ENCODE measurements at regions of chr3 and their contacts with region 1.

Region 1: GRCh38 chr3:58532794-58533220 is 4.2 kb downstream of the ACOX2 start:
- H3K4me3 Mint-ChIP-seq: no peak overlapping the region
- H3K27ac Mint-ChIP-seq: peak overlapping the region; percentile 26
- H3K4me1 Mint-ChIP-seq: peaks cover 39% of the 10 kb centered on the region
- H3K27me3 Mint-ChIP-seq: no peaks in the 10 kb centered on the region

Region 2: GRCh38 chr3:58305882-58306711 is 226.7 kb before region 1 on chr3 and contains the starts of genes HTD2 and RPP14:
- intact Hi-C with region 1: loop called (anchors 2 kb)
- H3K4me3 Mint-ChIP-seq: peak within 1 kb of the TSS; percentile 86
- H3K27ac Mint-ChIP-seq: peak within 1 kb of the TSS; percentile 99
- H3K4me1 Mint-ChIP-seq: peaks cover 25% of the 10 kb centered on the region
- H3K27me3 Mint-ChIP-seq: peaks cover 9% of the 10 kb centered on the region

Region 3: GRCh38 chr3:58324391-58325390 is 208.1 kb before region 1 on chr3:
- intact Hi-C with region 1: loop called (anchors 5 kb)
- H3K4me3 Mint-ChIP-seq: no peak overlapping the region
- H3K27ac Mint-ChIP-seq: no peak overlapping the region
- H3K4me1 Mint-ChIP-seq: peaks cover 12% of the 10 kb centered on the region
- H3K27me3 Mint-ChIP-seq: no peaks in the 10 kb centered on the region

Region 4: DNA sequence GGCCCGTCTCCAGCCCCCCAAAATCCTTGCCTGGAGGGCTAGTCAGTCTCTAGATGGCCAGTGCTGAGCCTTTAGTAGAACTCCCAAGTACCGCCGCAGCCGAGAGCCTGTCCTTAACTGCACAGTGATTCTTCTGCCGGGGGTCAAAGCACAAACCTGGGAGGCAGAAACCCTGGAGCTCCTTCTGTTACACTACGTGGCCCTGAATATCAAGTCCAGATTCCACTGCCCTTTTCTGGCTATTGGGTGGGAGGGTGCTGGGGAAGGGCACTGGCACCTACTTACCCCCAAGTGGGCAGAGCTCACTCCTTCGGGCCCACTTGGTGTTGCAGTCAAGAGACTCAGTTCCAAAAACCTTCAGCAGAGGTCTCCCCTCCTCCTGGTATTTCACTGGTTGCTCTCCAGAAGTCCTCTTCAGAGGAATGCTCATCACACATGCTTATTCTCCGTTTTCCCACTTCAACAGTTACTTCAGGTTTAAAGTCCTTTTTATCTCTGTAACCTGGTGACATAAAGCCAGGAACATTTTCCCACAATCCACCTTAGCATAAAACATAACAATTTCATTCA is 110.0 kb before region 1 on chr3:
- intact Hi-C with region 1: no loop called
- H3K4me3 Mint-ChIP-seq: no peak overlapping the region
- H3K27ac Mint-ChIP-seq: peak overlapping the region; percentile 24
- H3K4me1 Mint-ChIP-seq: peaks cover 29% of the 10 kb centered on the region
- H3K27me3 Mint-ChIP-seq: no peaks in the 10 kb centered on the region

Region 5: GRCh38 chr3:58433400-58434169 is 99.2 kb before region 1 on chr3 and contains the start of gene PDHB:
- intact Hi-C with region 1: loop called (anchors 1 kb)
- H3K4me3 Mint-ChIP-seq: peak within 1 kb of the TSS; percentile 83
- H3K27ac Mint-ChIP-seq: peak within 1 kb of the TSS; percentile 95
- H3K4me1 Mint-ChIP-seq: peaks cover 35% of the 10 kb centered on the region
- H3K27me3 Mint-ChIP-seq: no peaks in the 10 kb centered on the region

Region 6: DNA sequence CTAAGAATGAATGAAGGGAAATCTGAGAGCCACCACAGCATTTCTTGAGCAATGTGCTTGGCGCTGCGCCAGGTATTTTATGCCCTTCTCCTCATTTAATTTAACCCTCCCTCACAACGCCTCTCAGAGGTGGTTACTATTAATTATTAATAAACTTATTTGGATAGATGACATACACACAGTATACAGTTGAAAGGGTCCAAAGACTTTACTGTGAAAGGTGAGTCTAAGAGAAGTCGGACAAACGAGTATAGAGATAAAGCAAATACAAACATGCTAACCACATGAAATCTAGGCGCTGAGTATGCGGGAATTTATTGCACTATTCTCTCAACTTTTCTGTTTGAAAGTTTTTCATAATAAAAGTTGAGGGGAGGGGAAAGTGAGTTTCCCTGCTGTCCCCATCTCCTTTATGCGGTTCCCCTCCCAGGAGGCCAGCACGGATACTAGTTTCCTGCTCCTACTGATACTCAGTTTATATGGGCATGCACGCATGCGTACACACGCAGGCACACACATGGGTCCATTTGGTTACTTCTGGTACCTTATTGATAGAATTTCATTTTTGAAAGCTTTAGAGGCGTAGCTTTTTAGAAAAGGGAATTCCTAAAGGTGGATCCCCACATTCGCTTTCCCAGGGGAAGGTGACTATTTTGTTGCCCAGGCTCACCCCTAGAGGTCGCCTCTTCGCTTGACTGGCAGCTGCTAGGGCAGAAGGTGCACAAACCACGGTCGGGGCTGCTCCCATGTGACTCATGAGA is 69.4 kb before region 1 on chr3:
- intact Hi-C with region 1: loop called (anchors 1 kb)
- H3K4me3 Mint-ChIP-seq: peak overlapping the region; percentile 32
- H3K27ac Mint-ChIP-seq: no peak overlapping the region
- H3K4me1 Mint-ChIP-seq: peaks cover 11% of the 10 kb centered on the region
- H3K27me3 Mint-ChIP-seq: no peaks in the 10 kb centered on the region

Region 7: GRCh38 chr3:58577269-58577821 is 44.5 kb after region 1 on chr3 and contains the start of gene FAM107A:
- intact Hi-C with region 1: no loop called
- H3K4me3 Mint-ChIP-seq: no peak within 1 kb of the TSS
- H3K27ac Mint-ChIP-seq: no peak within 1 kb of the TSS
- H3K4me1 Mint-ChIP-seq: no peaks in the 10 kb centered on the region
- H3K27me3 Mint-ChIP-seq: peaks cover 17% of the 10 kb centered on the region

Region 8: DNA sequence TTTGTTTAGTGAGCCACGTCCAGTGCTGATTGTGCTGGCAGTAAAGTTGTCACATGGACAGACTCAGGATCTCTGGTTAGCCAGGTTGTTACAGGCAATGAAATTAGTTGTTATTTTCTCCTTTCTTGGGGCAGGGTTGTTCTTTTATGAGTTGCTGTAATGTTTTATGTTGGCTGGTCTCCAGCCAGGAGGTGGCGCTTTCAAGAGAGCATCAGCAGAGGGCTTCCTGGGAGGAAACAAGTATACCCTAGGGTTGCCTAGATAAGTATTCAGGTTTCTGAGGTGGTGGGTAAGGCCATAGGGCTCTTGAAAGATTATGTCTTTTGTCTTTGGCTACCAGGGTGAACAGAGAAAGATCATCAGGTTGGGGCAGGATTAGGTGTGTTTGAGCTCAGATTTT is 531.5 kb after region 1 on chr3:
- intact Hi-C with region 1: no loop called
- H3K4me3 Mint-ChIP-seq: no peak overlapping the region
- H3K27ac Mint-ChIP-seq: no peak overlapping the region
- H3K4me1 Mint-ChIP-seq: no peaks in the 10 kb centered on the region
- H3K27me3 Mint-ChIP-seq: peaks cover 4% of the 10 kb centered on the region